ENCODE measurements at regions of chr2 and their contacts with region 1.

Region 1: DNA sequence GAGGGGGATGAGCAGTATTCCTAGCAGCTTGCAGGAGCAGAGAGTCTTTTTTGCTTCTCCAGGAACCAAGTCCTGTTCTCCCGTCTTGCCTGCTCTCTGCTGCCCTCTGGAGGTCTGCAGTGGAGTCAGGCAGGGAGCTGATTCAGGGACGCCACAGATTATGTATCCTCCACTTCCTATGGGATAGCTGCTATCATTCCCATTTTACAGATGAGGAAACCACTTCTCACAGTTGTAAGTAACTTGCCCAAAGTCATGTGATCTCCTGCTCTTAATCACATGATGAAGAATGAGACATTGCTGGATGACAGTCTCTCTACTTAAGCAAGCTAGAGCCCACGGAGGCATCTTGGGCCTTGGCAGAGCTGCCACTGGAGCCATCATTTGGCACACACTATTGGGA is 8.3 kb downstream of the SLC4A5 start:
- DNase-seq: peak; percentile 61 to 88 (median 88)
- ATAC-seq: peak; percentile 98
- H3K4me3 ChIP-seq: no peak overlapping the region
- H3K4me1 ChIP-seq: peaks cover 4% of the 10 kb centered on the region
- CTCF ChIP-seq: peak; percentile 95

Region 2: GRCh38 chr2:73700131-73700611 is 634.8 kb before region 1 on chr2:
- intact Hi-C with region 1: no loop called
- DNase-seq: peak in 1 of 3 donors; percentile 56
- ATAC-seq: peak; percentile 66
- H3K4me3 ChIP-seq: no peak overlapping the region
- H3K4me1 ChIP-seq: peaks cover 28% of the 10 kb centered on the region
- CTCF ChIP-seq: no peak

Region 3: GRCh38 chr2:74261204-74261864 is 73.6 kb before region 1 on chr2:
- intact Hi-C with region 1: loop called in 1 of 2 experiments (anchors 10 kb)
- DNase-seq: peak in 2 of 3 donors; percentile 41 to 57
- ATAC-seq: peak; percentile 79
- H3K4me3 ChIP-seq: no peak overlapping the region
- H3K4me1 ChIP-seq: no peaks in the 10 kb centered on the region
- CTCF ChIP-seq: no peak

Region 4: GRCh38 chr2:74391580-74392448 is 56.9 kb after region 1 on chr2:
- intact Hi-C with region 1: loop called in 1 of 2 experiments (anchors 10 kb)
- DNase-seq: peak; percentile 91 to 97 (median 95)
- ATAC-seq: peak; percentile 99
- H3K4me3 ChIP-seq: peak overlapping the region; percentile 93
- H3K4me1 ChIP-seq: peaks cover 10% of the 10 kb centered on the region
- CTCF ChIP-seq: peak; percentile 97

Region 5: GRCh38 chr2:74458132-74458925 is 123.4 kb after region 1 on chr2 and contains the start of gene WBP1:
- intact Hi-C with region 1: no loop called
- DNase-seq: peak; percentile 99 to 100 (median 100)
- ATAC-seq: peak; percentile 85
- H3K4me3 ChIP-seq: peak within 1 kb of the TSS; percentile 27
- H3K4me1 ChIP-seq: peaks cover 32% of the 10 kb centered on the region
- CTCF ChIP-seq: no peak
- total RNA-seq, gene WBP1: 51.1 to 60.6 (median 56.1) TPM

Region 6: GRCh38 chr2:74740389-74741075 is 405.6 kb after region 1 on chr2:
- intact Hi-C with region 1: no loop called
- DNase-seq: peak; percentile 76 to 86 (median 79)
- ATAC-seq: peak; percentile 97
- H3K4me3 ChIP-seq: no peak overlapping the region
- H3K4me1 ChIP-seq: peaks cover 14% of the 10 kb centered on the region
- CTCF ChIP-seq: no peak